CD8-positive, alpha-beta T cell (primary cell): ENCODE measurements at regions of chr15 and their contacts with region 1.

Region 1: GRCh38 chr15:92903941-92904831 is 4.1 kb downstream of the CHD2 start:
- DNase-seq: peak; percentile 98 to 99 (median 99)
- ATAC-seq: peak; percentile 77
- H3K4me3 ChIP-seq: peak overlapping the region; percentile 75 to 88
- H3K4me3 Mint-ChIP-seq: peak overlapping the region; percentile 94
- H3K27ac ChIP-seq: peak overlapping the region; percentile 95 to 99
- H3K27ac Mint-ChIP-seq: peak overlapping the region; percentile 99
- H3K4me1 ChIP-seq: peaks cover 60% of the 10 kb centered on the region
- H3K4me1 Mint-ChIP-seq: peaks cover 58% of the 10 kb centered on the region
- H3K27me3 ChIP-seq: no peaks in the 10 kb centered on the region
- H3K27me3 Mint-ChIP-seq: no peaks in the 10 kb centered on the region
- CTCF ChIP-seq: no peak

Region 2: GRCh38 chr15:92820236-92821021 is 83.8 kb before region 1 on chr15:
- CTCF ChIA-PET with region 1: interaction called, 4 read pairs
- POLR2A ChIA-PET with region 1: interaction called, 16 read pairs
- intact Hi-C with region 1: no loop called
- DNase-seq: peak; percentile 64 to 94 (median 85)
- ATAC-seq: peak; percentile 88
- H3K4me3 ChIP-seq: peak overlapping the region; percentile 57 to 64
- H3K4me3 Mint-ChIP-seq: peak overlapping the region; percentile 87
- H3K27ac ChIP-seq: peak overlapping the region; percentile 69 to 75
- H3K27ac Mint-ChIP-seq: peak overlapping the region; percentile 94
- H3K4me1 ChIP-seq: peaks cover 47% of the 10 kb centered on the region
- H3K4me1 Mint-ChIP-seq: peaks cover 52% of the 10 kb centered on the region
- H3K27me3 ChIP-seq: no peaks in the 10 kb centered on the region
- H3K27me3 Mint-ChIP-seq: no peaks in the 10 kb centered on the region
- CTCF ChIP-seq: no peak

Region 3: DNA sequence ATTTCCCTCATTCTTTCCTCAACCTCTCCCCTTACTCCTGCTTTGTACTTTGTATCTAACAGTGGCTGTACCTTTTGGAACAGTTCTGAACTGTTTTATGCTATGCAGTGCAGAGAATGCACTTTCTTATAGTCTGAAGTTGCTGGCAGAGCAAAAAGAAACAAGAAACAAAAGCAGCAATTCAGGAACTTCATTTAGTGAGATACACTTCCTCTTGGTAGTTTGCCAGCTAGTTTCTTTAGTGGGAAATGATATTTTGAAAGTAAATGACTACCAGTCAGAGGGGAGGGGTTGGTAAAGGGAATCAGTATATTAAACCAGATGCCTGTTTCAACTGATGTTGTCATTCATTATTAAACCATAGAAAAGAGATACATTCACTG is 59.1 kb before region 1 on chr15:
- CTCF ChIA-PET with region 1: no interaction called
- POLR2A ChIA-PET with region 1: interaction called, 5 read pairs
- intact Hi-C with region 1: loop called in 1 of 2 experiments (anchors 2 kb)
- DNase-seq: peak in 2 of 9 experiments; percentile 57 to 79
- ATAC-seq: peak; percentile 34
- H3K4me3 ChIP-seq: peak overlapping the region in 1 of 2 experiments; percentile 4
- H3K4me3 Mint-ChIP-seq: peak overlapping the region; percentile 72
- H3K27ac ChIP-seq: peak overlapping the region; percentile 23 to 46
- H3K27ac Mint-ChIP-seq: peak overlapping the region; percentile 93
- H3K4me1 ChIP-seq: peaks cover 71% of the 10 kb centered on the region
- H3K4me1 Mint-ChIP-seq: peaks cover 75% of the 10 kb centered on the region
- H3K27me3 ChIP-seq: no peaks in the 10 kb centered on the region
- H3K27me3 Mint-ChIP-seq: no peaks in the 10 kb centered on the region
- CTCF ChIP-seq: no peak

Region 4: DNA sequence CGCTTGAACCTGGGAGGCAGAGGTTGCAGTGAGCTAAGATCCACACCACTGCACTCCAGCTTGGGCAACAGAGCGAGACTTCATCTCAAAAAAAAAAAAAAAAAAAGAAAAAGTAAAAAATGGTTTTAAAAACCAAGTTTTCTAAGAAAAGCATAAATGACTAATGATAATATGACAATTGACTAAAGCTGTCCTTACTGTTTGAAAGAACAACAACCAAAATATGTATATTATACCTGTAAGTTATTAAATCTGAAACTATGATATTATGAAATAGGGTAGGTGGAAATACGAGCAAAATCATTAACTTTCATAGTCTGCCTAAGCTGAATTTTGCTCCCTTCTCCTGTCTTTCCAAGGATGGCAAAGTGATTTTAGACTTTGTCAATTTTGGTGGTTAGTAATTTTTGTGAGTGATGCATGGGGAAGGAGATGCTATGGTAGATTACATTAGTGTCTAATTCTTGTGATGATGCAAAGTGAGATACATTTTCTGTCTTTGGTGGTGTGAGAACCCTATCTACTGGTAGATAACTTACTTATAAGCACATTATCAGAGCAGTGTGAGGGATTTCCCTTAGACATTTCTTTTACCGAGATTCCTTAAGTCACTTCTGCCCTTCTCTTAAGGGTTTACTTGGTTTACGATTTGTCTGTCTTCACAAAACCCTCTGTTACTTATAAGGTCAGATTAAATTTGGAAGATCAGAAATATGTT is 14.6 kb before region 1 on chr15:
- CTCF ChIA-PET with region 1: interaction called, 3 read pairs
- POLR2A ChIA-PET with region 1: interaction called, 319 read pairs
- intact Hi-C with region 1: loop called in 1 of 2 experiments (anchors 1 kb)
- DNase-seq: peak in 1 of 9 experiments; percentile 47
- ATAC-seq: peak; percentile 33
- H3K4me3 ChIP-seq: no peak overlapping the region
- H3K4me3 Mint-ChIP-seq: peak overlapping the region; percentile 80
- H3K27ac ChIP-seq: peak overlapping the region in 1 of 2 experiments; percentile 32
- H3K27ac Mint-ChIP-seq: peak overlapping the region; percentile 90
- H3K4me1 ChIP-seq: peaks cover 77% of the 10 kb centered on the region
- H3K4me1 Mint-ChIP-seq: peaks cover 76% of the 10 kb centered on the region
- H3K27me3 ChIP-seq: no peaks in the 10 kb centered on the region
- H3K27me3 Mint-ChIP-seq: no peaks in the 10 kb centered on the region
- CTCF ChIP-seq: no peak

Region 5: GRCh38 chr15:92947071-92947730 is 43.0 kb after region 1 on chr15:
- CTCF ChIA-PET with region 1: no interaction called
- POLR2A ChIA-PET with region 1: no interaction called
- intact Hi-C with region 1: no loop called
- DNase-seq: no peak
- ATAC-seq: no peak
- H3K4me3 ChIP-seq: no peak overlapping the region
- H3K4me3 Mint-ChIP-seq: no peak overlapping the region
- H3K27ac ChIP-seq: no peak overlapping the region
- H3K27ac Mint-ChIP-seq: no peak overlapping the region
- H3K4me1 ChIP-seq: no peaks in the 10 kb centered on the region
- H3K4me1 Mint-ChIP-seq: peaks cover 17% of the 10 kb centered on the region
- H3K27me3 ChIP-seq: no peaks in the 10 kb centered on the region
- H3K27me3 Mint-ChIP-seq: no peaks in the 10 kb centered on the region
- CTCF ChIP-seq: no peak

Region 6: GRCh38 chr15:93030430-93031105 is 126.4 kb after region 1 on chr15:
- CTCF ChIA-PET with region 1: no interaction called
- POLR2A ChIA-PET with region 1: no interaction called
- intact Hi-C with region 1: no loop called
- DNase-seq: peak; percentile 40 to 80 (median 67)
- ATAC-seq: peak; percentile 85
- H3K4me3 ChIP-seq: no peak overlapping the region
- H3K4me3 Mint-ChIP-seq: no peak overlapping the region
- H3K27ac ChIP-seq: no peak overlapping the region
- H3K27ac Mint-ChIP-seq: no peak overlapping the region
- H3K4me1 ChIP-seq: peaks cover 14% of the 10 kb centered on the region
- H3K4me1 Mint-ChIP-seq: peaks cover 26% of the 10 kb centered on the region
- H3K27me3 ChIP-seq: no peaks in the 10 kb centered on the region
- H3K27me3 Mint-ChIP-seq: no peaks in the 10 kb centered on the region
- CTCF ChIP-seq: peak; percentile 82